Activated CD4-positive, alpha-beta T cell treated with anti-CD3 and anti-CD28 coated beads for 36 hours (primary cell): ENCODE measurements at regions of chr3 and their contacts with region 1.

Region 1: GRCh38 chr3:147377412-147378367 is 28.7 kb downstream of the ZIC4 start:
- DNase-seq: no peak
- ATAC-seq: no peak
- H3K4me3 Mint-ChIP-seq: no peak overlapping the region
- H3K27ac Mint-ChIP-seq: no peak overlapping the region
- H3K4me1 Mint-ChIP-seq: no peaks in the 10 kb centered on the region
- H3K27me3 Mint-ChIP-seq: peaks cover 66% of the 10 kb centered on the region

Region 2: GRCh38 chr3:147410526-147411237 is 33.0 kb after region 1 on chr3:
- CTCF ChIA-PET with region 1: no interaction called
- POLR2A ChIA-PET with region 1: no interaction called
- intact Hi-C with region 1: loop called in 1 of 2 experiments (anchors 5 kb)
- DNase-seq: peak; percentile 31
- ATAC-seq: no peak
- H3K4me3 Mint-ChIP-seq: peak overlapping the region; percentile 54
- H3K27ac Mint-ChIP-seq: no peak overlapping the region
- H3K4me1 Mint-ChIP-seq: peaks cover 44% of the 10 kb centered on the region
- H3K27me3 Mint-ChIP-seq: peaks cover 73% of the 10 kb centered on the region